ENCODE measurements at regions of chr15 and their contacts with region 1.

Region 1: GRCh38 chr15:79431636-79432344 is at the start of gene MINAR1:
- DNase-seq: peak; percentile 47
- ATAC-seq: peak; percentile 56
- H3K4me3 Mint-ChIP-seq: peak within 1 kb of the TSS; percentile 82
- H3K27ac Mint-ChIP-seq: no peak within 1 kb of the TSS
- H3K4me1 Mint-ChIP-seq: peaks cover 45% of the 10 kb centered on the region
- H3K27me3 Mint-ChIP-seq: peaks cover 77% of the 10 kb centered on the region
- CTCF ChIP-seq: no peak
- total RNA-seq, gene MINAR1: 0.78 to 1.4 TPM (median 0.80 TPM) in 3 replicates

Region 2: DNA sequence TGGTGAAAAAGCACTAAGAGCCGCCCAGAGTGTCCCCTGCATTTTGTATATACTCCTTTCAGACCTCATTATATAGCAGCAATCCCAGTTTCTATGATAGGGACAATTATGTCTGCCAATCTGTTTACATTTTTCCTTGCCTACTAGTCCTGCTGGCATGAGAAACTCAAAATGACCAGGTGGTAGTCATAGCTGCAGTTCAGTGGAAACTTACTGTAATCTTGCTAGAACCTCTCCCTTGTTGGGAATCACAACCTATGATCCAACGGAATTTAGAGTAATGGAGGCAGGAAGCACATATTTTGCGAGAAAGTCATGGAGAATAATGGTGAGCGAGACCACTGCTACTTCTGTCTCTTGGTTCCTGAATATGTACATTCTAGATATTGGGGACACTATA is 28.3 kb before region 1 on chr15:
- CTCF ChIA-PET with region 1: no interaction called
- POLR2A ChIA-PET with region 1: no interaction called
- DNase-seq: no peak
- ATAC-seq: no peak
- H3K4me3 Mint-ChIP-seq: no peak overlapping the region
- H3K27ac Mint-ChIP-seq: no peak overlapping the region
- H3K4me1 Mint-ChIP-seq: peaks cover 15% of the 10 kb centered on the region
- H3K27me3 Mint-ChIP-seq: no peaks in the 10 kb centered on the region
- CTCF ChIP-seq: no peak

Region 3: GRCh38 chr15:79450648-79451047 is 18.9 kb after region 1 on chr15:
- CTCF ChIA-PET with region 1: interaction called, 17 read pairs
- POLR2A ChIA-PET with region 1: no interaction called
- DNase-seq: no peak
- ATAC-seq: 0 out of 2 replicates have a peak, but pooled peaks have one; percentile 22
- H3K4me3 Mint-ChIP-seq: no peak overlapping the region
- H3K27ac Mint-ChIP-seq: no peak overlapping the region
- H3K4me1 Mint-ChIP-seq: no peaks in the 10 kb centered on the region
- H3K27me3 Mint-ChIP-seq: no peaks in the 10 kb centered on the region
- CTCF ChIP-seq: no peak